Posterior cingulate gyrus (tissue), 11 donors: ENCODE measurements at regions of chr21 and their contacts with region 1.

Region 1: DNA sequence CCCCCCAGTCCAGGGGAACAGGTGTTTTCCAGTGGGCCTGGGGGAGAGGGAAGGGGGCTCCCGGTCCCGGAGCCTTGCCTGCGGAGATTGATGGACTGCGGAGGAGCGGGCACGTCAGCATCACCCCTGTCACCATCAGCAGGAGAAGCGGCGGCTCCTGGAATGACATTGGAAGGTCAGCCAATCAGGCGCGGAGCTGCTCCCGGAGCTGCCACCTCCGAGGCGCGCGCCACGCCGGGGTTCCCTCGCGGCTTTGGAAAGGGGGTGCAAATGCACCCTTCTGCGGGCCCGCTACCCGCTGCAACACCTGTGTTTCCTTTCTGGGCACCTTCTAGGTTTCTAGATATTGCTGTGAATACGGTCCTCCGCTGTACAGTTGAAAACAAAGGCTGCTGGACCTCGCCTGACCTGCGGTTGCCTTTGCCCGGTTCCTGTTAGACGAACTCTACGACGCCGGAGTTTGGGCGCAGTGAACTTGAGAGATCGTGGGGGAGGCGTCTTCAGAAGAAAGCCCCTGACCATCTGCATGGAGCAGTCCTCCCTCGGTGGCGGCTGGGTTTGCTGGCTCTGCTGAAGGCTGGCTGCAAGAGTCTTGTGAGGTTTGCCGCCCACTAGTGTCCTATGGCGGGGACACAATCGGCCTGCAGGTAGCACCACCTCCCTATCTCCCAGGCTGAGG is 5.3 kb downstream of the DSCAM start:
- DNase-seq: peak; percentile 65 to 97 (median 79)

Region 2: DNA sequence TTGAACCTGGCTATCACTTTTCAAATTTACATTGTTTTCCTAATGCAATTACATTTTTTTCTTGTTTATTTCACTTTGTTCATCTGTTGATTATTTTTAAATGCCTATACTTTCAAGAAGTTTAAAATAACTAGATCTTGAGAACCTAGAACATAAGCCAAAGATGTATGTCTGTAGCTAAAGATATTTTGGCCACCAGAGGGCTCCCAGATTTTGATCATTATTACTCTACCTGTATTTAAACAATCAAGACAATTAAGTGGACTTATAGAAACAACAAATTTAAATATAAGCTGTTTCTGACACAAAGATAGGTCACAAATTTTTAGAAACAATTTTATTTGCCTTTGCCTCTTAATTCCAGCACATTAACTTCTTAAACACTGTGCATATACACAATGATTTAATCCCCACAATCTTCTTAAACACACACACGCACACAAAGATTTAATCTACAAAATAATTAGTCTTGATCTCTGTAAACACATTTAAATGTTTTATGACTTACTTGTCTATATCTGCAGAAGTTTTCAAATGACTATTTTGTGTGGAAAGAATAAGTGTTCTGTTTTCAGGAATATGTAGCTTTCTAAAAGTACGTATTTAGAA is 374.7 kb before region 1 on chr21:
- intact Hi-C with region 1: loop called (anchors 10 kb)
- DNase-seq: no peak

Region 3: GRCh38 chr21:40736145-40736544 is 105.5 kb before region 1 on chr21:
- intact Hi-C with region 1: no loop called
- DNase-seq: no peak